HEK293 (cell line): ENCODE measurements at regions of chr1 and their contacts with region 1.

Region 1: DNA sequence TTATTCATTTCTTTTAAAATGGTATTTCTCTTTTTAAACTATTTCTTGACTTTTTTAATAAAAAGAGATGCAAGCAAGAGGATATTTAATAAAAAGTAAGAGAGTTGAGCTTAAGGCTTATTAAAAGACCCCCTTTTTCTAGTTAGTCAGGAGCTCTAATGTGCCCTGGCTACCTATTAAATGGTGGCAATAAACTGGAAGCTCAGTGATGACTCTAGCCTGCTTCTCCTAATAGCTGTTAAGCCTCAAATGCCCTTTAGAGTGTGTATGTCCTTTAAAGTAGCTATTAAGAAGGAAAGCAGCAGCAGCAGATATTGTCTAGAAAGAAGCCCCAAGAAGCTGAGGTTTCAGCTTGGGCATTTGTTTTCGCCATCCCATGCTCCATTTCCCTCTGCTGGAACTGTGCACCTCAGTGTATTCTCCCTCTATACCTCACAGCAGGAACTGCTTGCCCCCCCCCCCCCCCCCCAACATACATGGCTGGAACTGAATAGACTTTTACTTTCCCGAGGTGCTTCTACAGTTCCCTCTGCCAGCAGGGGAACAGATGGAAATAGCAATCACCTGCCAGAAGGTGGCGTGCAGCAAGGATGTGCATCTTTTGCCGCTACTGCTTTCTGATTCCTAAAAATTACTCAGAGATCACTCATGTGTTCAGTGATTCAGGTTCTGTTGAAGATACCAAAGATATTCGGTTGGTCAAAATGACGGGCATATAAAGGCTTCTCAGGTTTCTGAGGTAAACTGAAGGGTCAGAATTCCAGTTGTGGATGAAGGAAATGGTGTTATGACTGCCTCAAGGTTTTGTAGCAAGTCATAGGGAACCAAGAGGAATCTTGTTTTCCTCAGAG is 2.5 kb downstream of the RGS4 start:
- H3K4me3 ChIP-seq: no peak overlapping the region
- H3K27ac ChIP-seq: no peak overlapping the region
- H3K4me1 ChIP-seq: no peaks in the 10 kb centered on the region
- CTCF ChIP-seq: peak; percentile 68; the same call in 1 of the 2 replicates

Region 2: DNA sequence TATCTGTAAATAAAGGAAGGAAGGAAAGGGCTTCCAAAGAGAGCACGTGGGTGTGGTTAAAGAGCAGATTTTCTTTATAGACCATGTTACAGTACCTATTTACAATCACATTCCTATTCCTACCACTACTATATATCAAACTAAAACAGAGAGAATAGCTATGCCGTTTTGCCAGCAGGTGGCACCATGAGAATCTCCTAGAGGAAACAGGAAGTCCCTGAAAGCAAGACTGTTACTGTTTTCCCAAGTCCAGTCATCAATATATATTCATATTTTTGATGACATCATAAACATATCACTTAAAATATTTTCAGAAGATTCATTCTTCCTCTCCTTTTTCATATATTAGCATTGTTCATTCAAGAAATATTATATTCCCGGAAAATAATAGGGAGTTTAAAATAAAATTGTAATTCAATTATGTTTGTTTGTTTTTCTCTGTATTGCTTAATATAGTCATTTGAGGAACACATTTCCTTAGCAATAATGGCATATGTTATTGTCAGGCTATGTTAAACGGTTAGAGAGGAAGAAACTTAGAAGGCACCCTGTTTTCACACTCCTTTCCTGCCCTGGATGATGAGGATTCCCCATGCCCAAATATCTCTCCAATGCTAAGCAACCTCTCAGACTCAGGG is 217.3 kb before region 1 on chr1:
- CTCF ChIA-PET with region 1: interaction called, 39 read pairs
- POLR2A ChIA-PET with region 1: no interaction called
- H3K4me3 ChIP-seq: no peak overlapping the region
- H3K27ac ChIP-seq: no peak overlapping the region
- H3K4me1 ChIP-seq: peaks cover 7% of the 10 kb centered on the region; the same call in 1 of the 2 replicates
- CTCF ChIP-seq: peak; percentile 36; the same call in 1 of the 2 replicates

Region 3: GRCh38 chr1:162987866-162988265 is 83.8 kb before region 1 on chr1:
- CTCF ChIA-PET with region 1: interaction called, 14 read pairs
- POLR2A ChIA-PET with region 1: no interaction called
- H3K4me3 ChIP-seq: no peak overlapping the region
- H3K27ac ChIP-seq: no peak overlapping the region
- H3K4me1 ChIP-seq: no peaks in the 10 kb centered on the region
- CTCF ChIP-seq: no peak

Region 4: GRCh38 chr1:163090321-163090945 is 18.8 kb after region 1 on chr1:
- CTCF ChIA-PET with region 1: interaction called, 11 read pairs
- POLR2A ChIA-PET with region 1: no interaction called
- H3K4me3 ChIP-seq: no peak overlapping the region
- H3K27ac ChIP-seq: no peak overlapping the region
- H3K4me1 ChIP-seq: peaks cover 10% of the 10 kb centered on the region; the same call in 1 of the 2 replicates
- CTCF ChIP-seq: no peak

Region 5: DNA sequence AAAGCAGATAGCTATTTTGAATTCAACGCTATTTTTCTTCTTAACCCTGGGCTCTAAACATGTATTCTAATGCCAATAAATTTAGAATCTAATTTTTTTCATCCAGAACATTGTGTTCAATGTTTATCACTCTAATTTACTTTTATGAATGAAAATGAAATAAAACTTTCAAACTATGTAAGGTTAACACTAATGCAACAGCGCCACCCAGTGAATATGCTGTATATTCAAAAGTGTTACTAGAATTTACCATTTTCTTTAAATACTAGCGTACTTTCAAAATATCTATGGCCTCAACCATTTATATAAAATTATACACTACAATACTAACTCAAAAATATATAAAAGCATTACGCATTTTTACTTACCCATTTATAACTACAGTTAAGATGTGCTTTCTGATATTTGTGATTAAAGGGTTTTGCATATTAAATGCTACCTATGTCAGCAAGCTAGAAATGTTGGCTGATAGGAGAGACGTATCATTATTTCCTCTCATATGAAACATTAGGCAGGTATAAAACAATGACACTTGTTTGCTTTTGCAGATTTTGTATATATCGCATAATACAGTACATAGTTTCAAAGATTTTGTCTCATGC is 244.2 kb after region 1 on chr1:
- CTCF ChIA-PET with region 1: interaction called, 38 read pairs
- POLR2A ChIA-PET with region 1: no interaction called
- H3K4me3 ChIP-seq: no peak overlapping the region
- H3K27ac ChIP-seq: no peak overlapping the region
- H3K4me1 ChIP-seq: no peaks in the 10 kb centered on the region
- CTCF ChIP-seq: no peak